K562 (cell line): ENCODE measurements at regions of chr1 and their contacts with region 1.

Region 1: DNA sequence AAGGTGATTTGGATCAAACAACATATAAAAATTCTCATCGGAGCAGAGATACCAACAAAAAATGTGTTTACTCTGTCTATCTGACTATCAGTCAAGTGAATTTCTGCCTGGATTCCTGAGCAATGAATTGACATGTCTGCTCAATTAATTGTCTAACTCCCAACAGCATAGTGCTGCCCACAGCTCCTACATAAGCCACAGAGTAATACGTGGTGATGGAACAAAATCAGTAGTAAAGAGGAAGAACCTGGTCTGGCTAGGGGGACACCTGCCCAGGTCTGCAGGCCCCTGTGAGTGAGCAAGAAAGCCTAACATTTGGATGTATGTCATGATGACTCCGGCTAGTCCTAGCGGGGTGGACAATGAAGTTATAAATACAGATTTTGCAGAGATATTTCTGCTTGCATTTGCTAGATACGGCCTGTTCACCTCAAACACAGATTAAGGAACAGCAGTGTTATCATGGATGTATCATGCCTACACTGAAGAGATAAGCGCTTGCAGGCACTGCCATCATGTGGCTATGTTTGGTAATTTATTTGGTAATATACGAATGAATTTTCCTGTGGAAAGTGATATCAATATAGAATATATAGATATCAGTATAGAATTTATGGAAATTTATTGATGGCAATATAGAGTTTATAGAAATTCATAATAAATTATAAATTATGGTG is 69.6 kb upstream of the LRRC8B start:
- DNase-seq: peak; percentile 35 to 54 (median 44)
- ATAC-seq: peak; percentile 84
- H3K4me3 ChIP-seq: no peak overlapping the region
- H3K27ac ChIP-seq: no peak overlapping the region
- H3K4me1 ChIP-seq: no peaks in the 10 kb centered on the region
- H3K27me3 ChIP-seq: no peaks in the 10 kb centered on the region; a peak in 1 of 5 replicates
- CTCF ChIP-seq: peak; percentile 53 to 78 (median 55); a peak in 5 of 6 replicates
- EP300 ChIP-seq: no peak
- POLR2A ChIP-seq: no peak
- RAD21 ChIP-seq: peak; percentile 87 to 89

Region 2: GRCh38 chr1:88973520-88974137 is 481.4 kb before region 1 on chr1:
- CTCF ChIA-PET with region 1: interaction called, 15 read pairs
- POLR2A ChIA-PET with region 1: no interaction called
- in situ Hi-C with region 1: no loop called
- intact Hi-C with region 1: no loop called
- DNase-seq: peak in 3 of 4 experiments; percentile 24 to 48 (median 33)
- ATAC-seq: peak; percentile 68
- H3K4me3 ChIP-seq: no peak overlapping the region
- H3K27ac ChIP-seq: no peak overlapping the region
- H3K4me1 ChIP-seq: no peaks in the 10 kb centered on the region
- H3K27me3 ChIP-seq: no peaks in the 10 kb centered on the region
- CTCF ChIP-seq: peak; percentile 33 to 55 (median 55); a peak in 4 of 6 replicates
- EP300 ChIP-seq: no peak
- POLR2A ChIP-seq: no peak
- RAD21 ChIP-seq: peak; percentile 48 to 67; a peak in 3 of 4 replicates

Region 3: DNA sequence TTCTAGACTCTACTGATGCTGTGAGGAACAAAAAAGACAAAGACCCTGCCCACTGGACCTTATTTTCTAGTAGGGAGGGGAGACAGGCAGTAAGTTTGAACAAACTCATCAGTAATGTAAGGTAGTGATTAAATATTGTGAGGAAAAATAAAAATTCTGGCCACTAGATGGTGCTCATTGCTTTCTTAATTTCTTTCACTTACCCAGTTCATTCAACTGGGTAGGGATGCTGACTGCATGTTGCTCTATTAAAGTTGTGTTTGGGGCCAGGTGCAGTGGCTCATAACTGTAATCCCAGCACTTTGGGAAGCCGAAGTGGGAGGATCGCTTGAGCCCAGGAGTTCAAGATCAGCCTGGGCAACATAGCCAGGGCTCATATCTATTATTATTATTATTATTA is 456.3 kb before region 1 on chr1:
- CTCF ChIA-PET with region 1: interaction called, 19 read pairs
- POLR2A ChIA-PET with region 1: no interaction called
- in situ Hi-C with region 1: no loop called
- intact Hi-C with region 1: loop called (anchors 1 kb)
- DNase-seq: peak; percentile 38 to 74 (median 43)
- ATAC-seq: peak; percentile 93
- H3K4me3 ChIP-seq: no peak overlapping the region
- H3K27ac ChIP-seq: no peak overlapping the region
- H3K4me1 ChIP-seq: peaks cover 1% of the 10 kb centered on the region in 2 experiments; a peak in 2 of 5 replicates
- H3K27me3 ChIP-seq: peaks cover 0 to 3% of the 10 kb centered on the region in 2 experiments; a peak in 1 of 5 replicates
- CTCF ChIP-seq: peak; percentile 33 to 72 (median 35); a peak in 4 of 6 replicates
- EP300 ChIP-seq: no peak
- POLR2A ChIP-seq: no peak
- RAD21 ChIP-seq: peak; percentile 78 to 82

Region 4: DNA sequence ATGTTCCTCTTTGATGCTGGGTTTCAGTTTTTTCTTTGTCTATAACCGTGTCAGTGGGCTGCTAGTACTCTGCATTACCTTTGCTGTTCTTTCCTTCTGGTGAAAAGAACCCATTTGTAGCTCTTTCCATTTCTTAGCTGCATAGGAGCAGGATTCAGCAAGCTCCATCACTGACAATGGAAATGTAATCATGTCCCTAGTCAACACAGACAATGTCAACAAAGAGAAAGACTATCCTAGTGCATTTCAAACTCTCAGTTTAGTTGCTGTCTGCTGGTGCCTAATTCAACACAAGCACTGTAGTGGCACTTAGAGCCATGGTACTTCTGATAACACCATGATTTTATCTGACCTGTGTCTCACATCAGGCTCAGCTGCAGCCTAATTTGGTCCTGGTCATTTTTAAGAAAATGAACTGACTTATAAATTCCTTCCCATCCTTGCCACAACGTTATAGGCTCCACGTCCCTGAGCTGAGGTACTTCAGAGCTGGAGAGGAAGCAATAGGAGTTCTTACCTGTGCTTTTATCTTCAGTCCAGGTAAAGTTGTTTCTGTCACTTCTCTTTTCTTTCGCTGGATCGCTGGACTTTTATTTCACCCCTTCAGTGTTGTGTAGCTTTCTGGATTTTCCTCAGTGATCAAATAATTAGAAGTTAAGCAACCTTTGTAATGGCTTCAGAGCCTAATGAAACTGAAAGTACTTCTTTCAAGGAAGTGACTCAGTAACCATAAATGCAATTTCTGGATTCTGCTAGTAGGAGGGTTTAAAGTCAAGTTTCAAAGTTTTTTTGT is 432.6 kb before region 1 on chr1 and contains the start of gene GBP3:
- CTCF ChIA-PET with region 1: no interaction called
- POLR2A ChIA-PET with region 1: no interaction called
- in situ Hi-C with region 1: no loop called
- intact Hi-C with region 1: loop called (anchors 5 kb)
- DNase-seq: no peak
- ATAC-seq: no peak
- H3K4me3 ChIP-seq: no peak within 1 kb of the TSS
- H3K27ac ChIP-seq: no peak within 1 kb of the TSS
- H3K4me1 ChIP-seq: no peaks in the 10 kb centered on the region; a peak in 1 of 5 replicates
- H3K27me3 ChIP-seq: peaks cover 0 to 4% of the 10 kb centered on the region in 2 experiments; a peak in 1 of 5 replicates
- CTCF ChIP-seq: no peak
- EP300 ChIP-seq: no peak
- POLR2A ChIP-seq: no peak
- RAD21 ChIP-seq: no peak
- polyA plus RNA-seq, gene GBP3: 0.07 TPM in 1 of 2 experiments, not detected in the other

Region 5: DNA sequence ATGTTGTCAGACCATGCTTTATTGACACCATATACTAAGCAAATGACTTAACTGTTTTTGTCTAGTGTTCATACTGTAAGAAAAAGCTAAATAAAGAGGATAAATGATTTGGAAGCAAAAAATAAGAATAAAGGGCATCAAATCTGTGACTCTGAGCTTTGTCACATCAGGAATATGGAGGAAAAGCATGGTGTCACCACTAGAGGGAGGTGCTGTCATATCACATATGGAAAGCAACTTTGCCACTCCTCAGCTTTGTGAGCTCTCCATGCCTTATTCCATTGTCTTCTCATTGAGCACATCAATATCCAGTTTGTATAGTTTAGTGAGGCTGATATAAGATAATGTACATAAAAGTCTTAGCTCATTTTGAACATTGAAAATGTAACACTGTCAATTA is 369.2 kb before region 1 on chr1:
- CTCF ChIA-PET with region 1: no interaction called
- POLR2A ChIA-PET with region 1: no interaction called
- in situ Hi-C with region 1: no loop called
- intact Hi-C with region 1: loop called (anchors 1 kb)
- DNase-seq: peak; percentile 45 to 71 (median 52)
- ATAC-seq: peak; percentile 87
- H3K4me3 ChIP-seq: no peak overlapping the region
- H3K27ac ChIP-seq: no peak overlapping the region
- H3K4me1 ChIP-seq: peaks cover 0 to 4% of the 10 kb centered on the region in 2 experiments; a peak in 3 of 5 replicates
- H3K27me3 ChIP-seq: no peaks in the 10 kb centered on the region
- CTCF ChIP-seq: peak; percentile 65 to 85 (median 73)
- EP300 ChIP-seq: no peak
- POLR2A ChIP-seq: no peak
- RAD21 ChIP-seq: peak; percentile 83 to 91

Region 6: GRCh38 chr1:89358287-89358893 is 96.6 kb before region 1 on chr1:
- CTCF ChIA-PET with region 1: no interaction called
- POLR2A ChIA-PET with region 1: no interaction called
- in situ Hi-C with region 1: no loop called
- intact Hi-C with region 1: loop called (anchors 10 kb)
- DNase-seq: peak; percentile 23 to 74 (median 44)
- ATAC-seq: peak; percentile 98
- H3K4me3 ChIP-seq: no peak overlapping the region
- H3K27ac ChIP-seq: no peak overlapping the region
- H3K4me1 ChIP-seq: no peaks in the 10 kb centered on the region
- H3K27me3 ChIP-seq: 0 out of 5 replicates have a peak, but pooled peaks cover 0 to 4% of the 10 kb centered on the region in 2 experiments
- CTCF ChIP-seq: peak; percentile 73 to 80 (median 79)
- EP300 ChIP-seq: no peak
- POLR2A ChIP-seq: no peak
- RAD21 ChIP-seq: peak; percentile 83 to 88